ENCODE measurements at regions of chr7 and their contacts with region 1.

Region 1: GRCh38 chr7:150753826-150754603 is 16.8 kb downstream of the GIMAP5 start:
- DNase-seq: peak in 3 of 14 experiments; percentile 58 to 71 (median 68)
- ATAC-seq: peak; percentile 10
- H3K4me3 ChIP-seq: no peak overlapping the region
- H3K4me3 Mint-ChIP-seq: peak overlapping the region; percentile 57
- H3K27ac ChIP-seq: peak overlapping the region; percentile 66 to 72
- H3K27ac Mint-ChIP-seq: peak overlapping the region; percentile 99
- H3K4me1 ChIP-seq: peaks cover 66% of the 10 kb centered on the region
- H3K4me1 Mint-ChIP-seq: peaks cover 80% of the 10 kb centered on the region
- H3K27me3 ChIP-seq: no peaks in the 10 kb centered on the region
- H3K27me3 Mint-ChIP-seq: peaks cover 5% of the 10 kb centered on the region
- CTCF ChIP-seq: peak; percentile 38

Region 2: GRCh38 chr7:150356265-150356897 is 397.6 kb before region 1 on chr7:
- CTCF ChIA-PET with region 1: no interaction called
- POLR2A ChIA-PET with region 1: no interaction called
- intact Hi-C with region 1: loop called (anchors 5 to 10 kb)
- DNase-seq: peak in 4 of 14 experiments; percentile 46 to 78 (median 68)
- ATAC-seq: no peak
- H3K4me3 ChIP-seq: no peak overlapping the region
- H3K4me3 Mint-ChIP-seq: peak overlapping the region; percentile 25
- H3K27ac ChIP-seq: no peak overlapping the region
- H3K27ac Mint-ChIP-seq: peak overlapping the region; percentile 34
- H3K4me1 ChIP-seq: peaks cover 28% of the 10 kb centered on the region
- H3K4me1 Mint-ChIP-seq: peaks cover 37% of the 10 kb centered on the region
- H3K27me3 ChIP-seq: no peaks in the 10 kb centered on the region
- H3K27me3 Mint-ChIP-seq: no peaks in the 10 kb centered on the region
- CTCF ChIP-seq: peak; percentile 75

Region 3: GRCh38 chr7:150502519-150502918 is 251.5 kb before region 1 on chr7:
- CTCF ChIA-PET with region 1: no interaction called
- POLR2A ChIA-PET with region 1: interaction called, 10 read pairs
- intact Hi-C with region 1: no loop called
- DNase-seq: peak in 6 of 14 experiments; percentile 38 to 85 (median 64)
- ATAC-seq: peak; percentile 83
- H3K4me3 ChIP-seq: no peak overlapping the region
- H3K4me3 Mint-ChIP-seq: peak overlapping the region; percentile 50
- H3K27ac ChIP-seq: peak overlapping the region; percentile 66 to 69
- H3K27ac Mint-ChIP-seq: peak overlapping the region; percentile 88
- H3K4me1 ChIP-seq: peaks cover 44% of the 10 kb centered on the region
- H3K4me1 Mint-ChIP-seq: peaks cover 89% of the 10 kb centered on the region
- H3K27me3 ChIP-seq: no peaks in the 10 kb centered on the region
- H3K27me3 Mint-ChIP-seq: no peaks in the 10 kb centered on the region
- CTCF ChIP-seq: no peak

Region 4: DNA sequence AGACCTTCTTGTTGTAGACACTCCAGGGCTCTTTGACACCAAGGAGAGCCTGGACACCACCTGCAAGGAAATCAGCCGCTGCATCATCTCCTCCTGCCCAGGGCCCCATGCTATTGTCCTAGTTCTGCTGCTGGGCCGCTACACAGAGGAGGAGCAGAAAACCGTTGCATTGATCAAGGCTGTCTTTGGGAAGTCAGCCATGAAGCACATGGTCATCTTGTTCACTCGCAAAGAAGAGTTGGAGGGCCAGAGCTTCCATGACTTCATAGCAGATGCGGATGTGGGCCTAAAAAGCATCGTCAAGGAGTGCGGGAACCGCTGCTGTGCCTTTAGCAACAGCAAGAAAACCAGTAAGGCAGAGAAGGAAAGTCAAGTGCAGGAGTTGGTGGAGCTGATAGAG is 233.9 kb before region 1 on chr7:
- CTCF ChIA-PET with region 1: no interaction called
- POLR2A ChIA-PET with region 1: interaction called, 40 read pairs
- intact Hi-C with region 1: loop called (anchors 2 kb)
- DNase-seq: peak in 9 of 14 experiments; percentile 23 to 59 (median 47)
- ATAC-seq: peak; percentile 33
- H3K4me3 ChIP-seq: peak overlapping the region; percentile 79
- H3K4me3 Mint-ChIP-seq: peak overlapping the region; percentile 100
- H3K27ac ChIP-seq: peak overlapping the region; percentile 59 to 60
- H3K27ac Mint-ChIP-seq: peak overlapping the region; percentile 93
- H3K4me1 ChIP-seq: peaks cover 12% of the 10 kb centered on the region
- H3K4me1 Mint-ChIP-seq: peaks cover 36% of the 10 kb centered on the region
- H3K27me3 ChIP-seq: no peaks in the 10 kb centered on the region
- H3K27me3 Mint-ChIP-seq: no peaks in the 10 kb centered on the region
- CTCF ChIP-seq: no peak

Region 5: DNA sequence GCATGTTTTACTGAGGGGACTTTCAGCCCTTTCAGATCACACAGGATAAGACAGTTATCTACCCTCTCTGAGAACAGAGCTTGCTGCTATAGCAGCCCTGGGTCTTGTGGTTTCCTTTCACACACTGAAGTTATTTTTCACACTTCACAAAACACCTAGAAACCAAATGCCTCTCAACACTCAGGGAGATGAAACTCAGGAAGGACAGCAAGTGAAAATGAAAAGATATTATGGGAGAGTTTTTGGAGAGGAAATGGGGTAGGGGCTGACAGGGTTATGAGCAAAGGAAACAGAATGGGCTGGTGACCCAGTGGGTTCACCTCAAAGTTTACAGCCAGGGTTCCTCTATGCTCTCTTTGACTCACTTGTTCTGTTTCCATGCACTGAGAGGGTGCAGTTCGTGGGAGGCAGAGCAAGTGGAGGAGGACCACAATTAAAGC is 85.5 kb before region 1 on chr7:
- CTCF ChIA-PET with region 1: interaction called, 3 read pairs
- POLR2A ChIA-PET with region 1: interaction called, 18 read pairs
- intact Hi-C with region 1: no loop called
- DNase-seq: peak in 13 of 14 experiments; percentile 34 to 92 (median 51)
- ATAC-seq: peak; percentile 82
- H3K4me3 ChIP-seq: peak overlapping the region; percentile 4
- H3K4me3 Mint-ChIP-seq: peak overlapping the region; percentile 49
- H3K27ac ChIP-seq: peak overlapping the region; percentile 73 to 85
- H3K27ac Mint-ChIP-seq: peak overlapping the region; percentile 91
- H3K4me1 ChIP-seq: peaks cover 70% of the 10 kb centered on the region
- H3K4me1 Mint-ChIP-seq: peaks cover 94% of the 10 kb centered on the region
- H3K27me3 ChIP-seq: no peaks in the 10 kb centered on the region
- H3K27me3 Mint-ChIP-seq: no peaks in the 10 kb centered on the region
- CTCF ChIP-seq: no peak

Region 6: GRCh38 chr7:150716368-150716767 is 37.6 kb before region 1 on chr7 and contains the start of gene GIMAP1:
- CTCF ChIA-PET with region 1: interaction called, 9 read pairs
- POLR2A ChIA-PET with region 1: interaction called, 88 read pairs
- intact Hi-C with region 1: loop called (anchors 5 kb)
- DNase-seq: peak; percentile 35 to 85 (median 72)
- ATAC-seq: peak; percentile 88
- H3K4me3 ChIP-seq: peak within 1 kb of the TSS; percentile 79
- H3K4me3 Mint-ChIP-seq: peak within 1 kb of the TSS; percentile 100
- H3K27ac ChIP-seq: peak within 1 kb of the TSS; percentile 81 to 83
- H3K27ac Mint-ChIP-seq: peak within 1 kb of the TSS; percentile 87
- H3K4me1 ChIP-seq: peaks cover 51% of the 10 kb centered on the region
- H3K4me1 Mint-ChIP-seq: peaks cover 78% of the 10 kb centered on the region
- H3K27me3 ChIP-seq: no peaks in the 10 kb centered on the region
- H3K27me3 Mint-ChIP-seq: no peaks in the 10 kb centered on the region
- CTCF ChIP-seq: no peak
- total RNA-seq, gene GIMAP1: 8.0 to 8.1 TPM